CD8-positive, alpha-beta memory T cell (primary cell): ENCODE measurements at regions of chr7 and their contacts with region 1.

Region 1: DNA sequence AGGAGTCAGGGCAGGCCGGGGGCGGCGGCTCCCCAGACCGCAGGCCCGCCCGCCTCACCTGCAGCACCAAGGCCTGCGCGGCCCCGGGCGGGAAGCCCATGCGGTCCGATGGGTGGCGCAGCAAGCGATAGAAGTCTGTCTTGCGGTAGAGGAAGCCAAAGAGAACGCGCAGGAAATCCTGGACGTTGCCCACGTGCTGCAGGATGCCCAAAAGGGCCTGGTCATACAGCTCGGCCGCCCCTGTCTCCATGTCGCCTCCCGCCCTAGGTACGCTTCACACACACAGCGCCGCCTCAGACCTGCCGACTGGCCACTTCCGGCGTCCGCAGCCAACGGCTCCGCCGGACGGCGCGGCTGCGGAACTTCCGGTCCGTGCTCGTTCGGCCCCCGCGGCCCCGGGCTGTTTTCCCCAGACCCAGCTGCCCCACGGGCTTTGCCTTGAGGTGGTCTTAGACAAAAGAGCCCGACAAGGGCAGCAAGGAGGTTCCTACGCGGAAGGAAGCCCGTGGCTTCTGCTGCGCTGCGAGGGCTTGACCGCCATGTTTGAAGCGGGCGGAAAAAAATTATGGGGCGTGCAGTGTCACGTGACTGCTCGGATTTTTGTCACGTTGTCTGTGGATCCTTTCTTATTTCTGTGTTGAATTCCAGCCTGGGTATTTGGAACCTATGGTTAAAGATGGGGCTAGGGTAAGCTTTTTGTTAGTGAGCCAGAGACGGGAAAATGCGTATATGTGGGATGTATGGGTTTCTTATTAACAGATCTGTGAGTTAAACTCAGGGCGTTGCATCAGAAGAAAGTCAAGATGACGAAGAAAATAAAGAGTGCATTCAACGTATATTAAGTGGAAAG is at the start of gene NUDCD3:
- DNase-seq: peak; percentile 63 to 87 (median 78)
- H3K4me3 ChIP-seq: peak within 1 kb of the TSS; percentile 65
- H3K4me3 Mint-ChIP-seq: peak within 1 kb of the TSS; percentile 82 to 95 (median 88)
- H3K27ac ChIP-seq: peak within 1 kb of the TSS; percentile 99
- H3K27ac Mint-ChIP-seq: peak within 1 kb of the TSS; percentile 90 to 99 (median 93)
- H3K4me1 ChIP-seq: peaks cover 43% of the 10 kb centered on the region
- H3K4me1 Mint-ChIP-seq: peaks cover 43 to 49% (median 49%) of the 10 kb centered on the region in 3 donors
- H3K27me3 ChIP-seq: no peaks in the 10 kb centered on the region
- H3K27me3 Mint-ChIP-seq: peaks cover 3 to 9% of the 10 kb centered on the region in 2 donors
- total RNA-seq, gene NUDCD3: 98.8 to 99.5 TPM

Region 2: DNA sequence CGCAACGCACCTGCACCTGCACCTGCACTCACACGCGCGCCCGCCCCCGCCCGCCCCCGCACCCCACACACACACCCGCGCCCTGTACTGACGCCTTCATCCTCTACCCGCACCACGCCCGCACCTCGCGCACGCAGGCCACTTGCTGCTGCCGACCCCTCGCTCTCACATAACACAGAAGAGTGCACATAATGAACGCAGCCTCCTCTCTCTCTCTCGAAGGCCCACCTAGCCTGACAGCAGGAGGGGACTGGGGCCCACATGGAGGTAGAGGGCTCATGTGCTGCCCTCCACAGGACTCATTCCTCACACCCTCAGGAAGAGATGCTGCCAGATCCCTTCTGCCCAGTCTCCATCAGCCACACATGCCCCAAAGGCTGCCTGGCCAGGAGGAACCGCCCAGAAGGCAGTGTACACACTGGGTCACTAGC is 164.8 kb before region 1 on chr7:
- CTCF ChIA-PET with region 1: no interaction called
- POLR2A ChIA-PET with region 1: no interaction called
- DNase-seq: no peak
- H3K4me3 ChIP-seq: no peak overlapping the region
- H3K4me3 Mint-ChIP-seq: peak overlapping the region in 6 of 7 donors; percentile 66 to 78 (median 78)
- H3K27ac ChIP-seq: no peak overlapping the region
- H3K27ac Mint-ChIP-seq: no peak overlapping the region
- H3K4me1 ChIP-seq: no peaks in the 10 kb centered on the region
- H3K4me1 Mint-ChIP-seq: peaks cover 5 to 14% (median 6%) of the 10 kb centered on the region in 3 donors
- H3K27me3 ChIP-seq: peaks cover 3% of the 10 kb centered on the region
- H3K27me3 Mint-ChIP-seq: peaks cover 36 to 53% of the 10 kb centered on the region in 2 donors

Region 3: GRCh38 chr7:44460325-44460724 is 30.3 kb before region 1 on chr7:
- CTCF ChIA-PET with region 1: interaction called, 5 read pairs
- POLR2A ChIA-PET with region 1: interaction called, 29 read pairs
- DNase-seq: peak; percentile 53 to 90 (median 81)
- H3K4me3 ChIP-seq: peak overlapping the region; percentile 53
- H3K4me3 Mint-ChIP-seq: peak overlapping the region; percentile 41 to 78 (median 53)
- H3K27ac ChIP-seq: no peak overlapping the region
- H3K27ac Mint-ChIP-seq: peak overlapping the region; percentile 40 to 91 (median 84)
- H3K4me1 ChIP-seq: peaks cover 51% of the 10 kb centered on the region
- H3K4me1 Mint-ChIP-seq: peaks cover 63 to 89% (median 87%) of the 10 kb centered on the region in 3 donors
- H3K27me3 ChIP-seq: no peaks in the 10 kb centered on the region
- H3K27me3 Mint-ChIP-seq: no peaks in the 10 kb centered on the region